ENCODE measurements at regions of chr2 and their contacts with region 1.

Region 1: GRCh38 chr2:99489761-99490622 is at the start of gene REV1:
- DNase-seq: peak; percentile 95 to 97
- ATAC-seq: peak; percentile 97
- H3K4me3 ChIP-seq: peak within 1 kb of the TSS; percentile 72 to 96
- H3K27ac ChIP-seq: peak within 1 kb of the TSS; percentile 68
- H3K4me1 ChIP-seq: no peaks in the 10 kb centered on the region
- H3K27me3 ChIP-seq: no peaks in the 10 kb centered on the region
- total RNA-seq, gene REV1: 50.8 to 69.0 TPM

Region 2: DNA sequence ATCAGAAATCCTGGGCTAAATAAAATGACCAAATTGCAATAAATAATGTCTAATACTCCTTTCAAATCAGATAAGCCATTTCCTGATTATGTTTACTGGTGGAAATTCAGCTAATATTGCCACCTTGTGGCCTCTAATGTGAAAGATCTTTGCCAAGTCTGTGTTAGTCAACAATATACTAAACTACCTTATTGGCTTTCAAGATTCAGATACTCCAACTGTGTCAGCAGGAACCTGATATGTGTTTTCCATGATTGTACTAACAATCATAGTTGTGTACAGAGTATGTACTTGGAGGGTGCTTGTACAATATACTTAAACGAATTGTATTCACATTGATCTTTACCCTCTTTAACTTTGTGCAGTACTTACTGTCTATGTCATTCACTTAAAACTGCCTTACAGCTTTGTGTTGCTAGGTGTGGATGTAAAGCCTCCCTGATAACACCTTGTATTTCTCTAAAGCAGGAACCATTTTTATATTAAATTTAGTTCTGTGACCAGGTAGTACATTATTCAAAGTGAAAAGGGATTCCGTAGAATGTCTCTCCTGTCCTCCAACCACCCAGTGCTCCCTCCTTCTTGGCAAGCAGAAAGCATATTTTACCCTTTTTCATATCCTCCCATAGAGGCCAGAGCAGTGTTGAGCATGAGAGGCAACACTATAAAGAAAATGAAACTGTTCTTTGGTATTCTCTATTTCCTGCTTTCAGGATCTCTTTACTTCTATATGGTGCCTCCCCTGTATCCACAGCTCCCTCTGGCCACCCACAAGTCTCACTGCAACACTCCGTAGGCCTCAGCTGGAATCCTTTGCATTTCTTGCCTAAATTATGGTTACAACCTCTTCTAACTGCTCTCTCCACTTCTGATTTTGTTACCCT is 423.7 kb before region 1 on chr2:
- intact Hi-C with region 1: loop called in 1 of 2 experiments (anchors 10 kb)
- DNase-seq: no peak
- ATAC-seq: no peak
- H3K4me3 ChIP-seq: no peak overlapping the region
- H3K27ac ChIP-seq: no peak overlapping the region
- H3K4me1 ChIP-seq: no peaks in the 10 kb centered on the region
- H3K27me3 ChIP-seq: no peaks in the 10 kb centered on the region

Region 3: DNA sequence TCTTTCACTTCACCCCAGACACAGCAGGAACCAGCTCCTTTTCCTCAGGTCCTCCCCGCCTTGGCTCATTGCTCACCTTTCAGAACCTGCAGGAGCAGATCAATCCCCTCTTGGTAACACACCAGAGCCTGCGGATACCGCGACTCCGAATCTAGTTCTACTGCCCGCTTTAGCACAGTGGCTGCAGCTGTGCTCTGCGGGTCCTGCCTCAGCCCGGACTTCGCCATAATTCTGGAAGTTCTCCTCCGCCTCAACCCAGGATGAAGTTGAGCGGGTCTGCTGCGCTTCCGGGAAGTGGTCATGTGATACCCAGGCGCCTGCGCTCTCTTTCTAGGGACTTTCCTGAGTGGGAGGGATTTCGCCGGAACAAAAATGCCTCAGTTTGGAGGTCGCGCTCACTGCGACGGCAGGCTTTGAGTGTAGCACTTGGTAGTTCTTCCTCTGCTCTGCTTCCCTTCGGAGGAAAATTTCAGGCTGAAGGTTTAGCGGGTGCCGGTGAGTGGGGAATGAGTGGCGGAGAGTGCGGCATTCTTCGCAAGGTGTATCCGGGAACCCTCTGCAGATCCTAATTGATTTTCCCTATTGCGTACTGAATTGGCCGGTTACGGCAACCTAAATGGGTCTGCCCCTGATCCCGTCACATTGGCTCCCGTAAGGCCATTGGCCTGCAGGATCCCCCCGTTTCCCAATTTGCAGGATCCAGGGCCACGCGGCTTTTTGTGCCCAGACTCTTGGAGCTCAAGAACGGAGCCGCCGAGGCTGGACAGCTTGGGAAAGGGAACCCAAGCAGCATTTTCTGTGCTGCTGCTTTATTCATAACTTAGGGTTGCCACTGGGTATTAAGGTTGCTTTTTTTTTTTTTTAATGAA is 309.0 kb before region 1 on chr2 and contains the starts of genes MITD1 and MRPL30:
- intact Hi-C with region 1: loop called in 1 of 2 experiments (anchors 5 kb)
- DNase-seq: peak; percentile 95 to 96
- ATAC-seq: peak; percentile 97
- H3K4me3 ChIP-seq: peak within 1 kb of the TSS; percentile 96 to 100
- H3K27ac ChIP-seq: peak within 1 kb of the TSS in 1 of 2 donors; percentile 65
- H3K4me1 ChIP-seq: peaks cover 0 to 5% of the 10 kb centered on the region in 2 donors
- H3K27me3 ChIP-seq: no peaks in the 10 kb centered on the region
- total RNA-seq, gene MITD1: 20.2 to 28.0 TPM
- total RNA-seq, gene MRPL30: 17.4 to 19.8 TPM

Region 4: GRCh38 chr2:99337113-99338028 is 152.6 kb before region 1 on chr2 and contains the start of gene EIF5B:
- intact Hi-C with region 1: loop called (anchors 1 to 2 kb)
- DNase-seq: peak; percentile 98 to 99
- ATAC-seq: peak; percentile 96
- H3K4me3 ChIP-seq: peak within 1 kb of the TSS; percentile 56 to 86
- H3K27ac ChIP-seq: peak within 1 kb of the TSS; percentile 47 to 49
- H3K4me1 ChIP-seq: no peaks in the 10 kb centered on the region
- H3K27me3 ChIP-seq: no peaks in the 10 kb centered on the region
- total RNA-seq, gene EIF5B: 42.3 to 57.9 TPM

Region 5: DNA sequence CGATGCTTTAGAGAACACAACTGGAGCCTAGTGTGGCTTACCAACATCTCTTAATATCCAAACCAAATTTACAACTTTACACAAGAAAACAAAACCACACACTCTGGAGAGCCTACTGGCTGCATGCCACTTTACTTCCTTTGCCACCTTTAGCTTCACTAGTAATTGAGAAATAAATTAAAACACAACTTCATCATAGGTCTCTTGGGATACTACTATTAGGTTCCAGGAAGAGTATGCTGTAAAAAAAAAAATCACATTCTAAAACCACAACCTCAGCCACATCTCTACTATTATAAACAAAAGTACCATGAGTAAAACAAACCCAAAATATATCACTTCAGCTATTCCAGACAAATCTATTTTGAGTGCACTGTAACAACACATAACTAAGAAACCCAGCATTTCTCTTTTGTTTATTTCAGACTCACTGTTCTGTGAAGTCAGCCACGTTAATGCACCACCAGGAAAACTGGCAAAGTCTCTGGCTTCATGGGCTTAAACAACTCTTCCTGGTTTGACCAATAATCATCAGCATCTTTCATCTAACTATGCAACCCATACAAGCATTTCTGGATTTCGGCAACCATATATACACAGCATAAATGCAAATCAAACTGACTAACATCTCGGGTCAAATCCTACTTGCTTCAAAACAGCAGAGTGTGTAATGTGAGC is 59.2 kb before region 1 on chr2:
- intact Hi-C with region 1: loop called in 1 of 2 experiments (anchors 10 kb)
- DNase-seq: no peak
- ATAC-seq: no peak
- H3K4me3 ChIP-seq: no peak overlapping the region
- H3K27ac ChIP-seq: no peak overlapping the region
- H3K4me1 ChIP-seq: peaks cover 3% of the 10 kb centered on the region in 2 donors
- H3K27me3 ChIP-seq: no peaks in the 10 kb centered on the region

Measured in aorta (tissue), 5 donors.